ENCODE measurements at regions of chrX and their contacts with region 1.

Region 1: DNA sequence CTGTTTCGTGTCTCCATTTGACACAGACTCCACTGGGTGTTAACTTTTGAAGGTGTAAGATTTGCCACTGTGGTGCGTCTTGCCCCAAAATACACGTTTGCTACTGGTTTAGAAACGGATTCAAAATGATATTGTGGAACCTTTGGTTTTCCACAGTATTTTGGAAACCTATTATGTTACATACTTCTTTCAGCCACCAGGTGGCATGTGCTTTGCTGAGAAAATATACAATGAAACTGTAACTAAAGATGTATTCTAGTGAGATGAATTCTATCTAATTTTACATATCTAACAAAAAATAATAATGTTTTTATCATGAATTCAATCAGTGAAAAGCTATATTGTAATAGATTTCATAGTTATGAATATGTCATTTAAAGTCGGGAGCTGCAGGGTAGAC is 28.4 kb upstream of the SLITRK4 start:
- DNase-seq: peak in 1 of 10 donors; percentile 3
- H3K4me3 ChIP-seq: no peak overlapping the region
- H3K27ac ChIP-seq: no peak overlapping the region
- H3K27me3 ChIP-seq: peaks cover 0 to 38% (median 4%) of the 10 kb centered on the region in 45 donors
- CTCF ChIP-seq: peak in 55 of 56 donors; percentile 31 to 77 (median 62)

Region 2: DNA sequence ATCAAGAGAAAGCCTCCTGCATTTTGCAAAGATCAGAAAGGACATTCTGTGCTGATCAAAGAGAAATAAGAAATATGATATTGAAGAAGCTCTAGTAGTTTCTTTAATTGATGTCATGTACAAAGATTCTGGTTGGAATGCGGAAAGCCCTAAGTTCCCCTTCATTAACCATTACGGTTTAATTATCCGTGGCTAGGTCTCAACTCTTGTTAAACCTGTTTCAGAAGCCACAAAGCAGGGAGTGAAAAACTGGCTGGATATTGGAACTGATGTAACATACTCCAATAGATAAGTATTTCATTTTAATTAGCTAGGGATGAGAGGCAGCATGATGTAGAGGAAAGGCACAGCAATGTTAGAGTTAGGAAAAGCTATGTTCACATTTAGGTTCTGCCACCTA is 202.7 kb before region 1 on chrX:
- intact Hi-C with region 1: no loop called
- DNase-seq: no peak
- H3K4me3 ChIP-seq: no peak overlapping the region
- H3K27ac ChIP-seq: no peak overlapping the region
- H3K27me3 ChIP-seq: peaks cover 0 to 57% (median 5%) of the 10 kb centered on the region in 45 donors
- CTCF ChIP-seq: no peak

Region 3: DNA sequence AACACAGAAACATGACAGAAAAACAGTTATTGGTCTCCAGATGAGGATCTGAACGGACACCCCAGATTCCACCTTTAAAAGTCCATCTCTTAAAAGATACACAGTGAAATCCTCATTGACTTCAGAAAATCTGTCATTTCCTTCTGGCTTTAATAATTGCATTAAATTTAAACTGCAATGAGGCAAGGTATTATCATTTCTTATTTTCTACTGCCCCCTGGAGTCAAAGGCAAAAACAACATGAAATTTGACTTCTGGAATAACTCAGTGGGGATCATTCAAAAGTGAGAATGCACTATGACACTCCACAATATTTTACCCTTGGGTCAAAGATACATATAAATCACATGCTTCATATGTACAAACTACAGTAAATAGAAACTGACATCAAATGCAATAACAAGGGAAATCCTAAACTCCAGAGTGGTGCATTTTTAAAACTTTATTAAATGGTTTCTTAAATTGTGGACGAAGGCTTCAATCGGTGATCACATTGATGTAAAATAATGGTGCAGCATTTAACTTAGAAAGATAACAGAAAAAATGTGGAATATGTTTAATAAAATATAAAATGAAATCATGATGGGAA is 1526.6 kb after region 1 on chrX:
- intact Hi-C with region 1: loop called in 1 of 2 experiments (anchors 10 kb)
- DNase-seq: no peak
- H3K4me3 ChIP-seq: no peak overlapping the region
- H3K27ac ChIP-seq: no peak overlapping the region
- H3K27me3 ChIP-seq: peaks cover 0 to 47% (median 4%) of the 10 kb centered on the region in 45 donors
- CTCF ChIP-seq: peak; percentile 19 to 72 (median 52)

Measured in dorsolateral prefrontal cortex (tissue), 120 donors.